ENCODE measurements at regions of chr1 and their contacts with region 1.

Region 1: GRCh38 chr1:248622570-248623001 is 12.3 kb downstream of the OR2T11 start:
- DNase-seq: peak in 1 of 2 experiments; percentile 12
- H3K4me3 ChIP-seq: no peak overlapping the region
- H3K4me3 Mint-ChIP-seq: no peak overlapping the region
- H3K27ac Mint-ChIP-seq: no peak overlapping the region
- H3K4me1 ChIP-seq: no peaks in the 10 kb centered on the region
- H3K4me1 Mint-ChIP-seq: no peaks in the 10 kb centered on the region
- H3K27me3 ChIP-seq: no peaks in the 10 kb centered on the region
- H3K27me3 Mint-ChIP-seq: peaks cover 14% of the 10 kb centered on the region
- CTCF ChIP-seq: peak in 1 of 2 experiments; percentile 51

Region 2: GRCh38 chr1:248686815-248687214 is 64.2 kb after region 1 on chr1:
- CTCF ChIA-PET with region 1: no interaction called
- POLR2A ChIA-PET with region 1: no interaction called
- intact Hi-C with region 1: loop called (anchors 1 kb)
- DNase-seq: peak in 1 of 2 experiments; percentile 23
- H3K4me3 ChIP-seq: no peak overlapping the region
- H3K4me3 Mint-ChIP-seq: no peak overlapping the region
- H3K27ac Mint-ChIP-seq: no peak overlapping the region
- H3K4me1 ChIP-seq: no peaks in the 10 kb centered on the region
- H3K4me1 Mint-ChIP-seq: no peaks in the 10 kb centered on the region
- H3K27me3 ChIP-seq: no peaks in the 10 kb centered on the region
- H3K27me3 Mint-ChIP-seq: no peaks in the 10 kb centered on the region
- CTCF ChIP-seq: peak in 1 of 2 experiments; percentile 24

Region 3: GRCh38 chr1:248696261-248696660 is 73.7 kb after region 1 on chr1:
- CTCF ChIA-PET with region 1: no interaction called
- POLR2A ChIA-PET with region 1: no interaction called
- intact Hi-C with region 1: loop called (anchors 2 kb)
- DNase-seq: peak; percentile 26 to 38
- H3K4me3 ChIP-seq: no peak overlapping the region
- H3K4me3 Mint-ChIP-seq: no peak overlapping the region
- H3K27ac Mint-ChIP-seq: no peak overlapping the region
- H3K4me1 ChIP-seq: no peaks in the 10 kb centered on the region
- H3K4me1 Mint-ChIP-seq: no peaks in the 10 kb centered on the region
- H3K27me3 ChIP-seq: no peaks in the 10 kb centered on the region
- H3K27me3 Mint-ChIP-seq: no peaks in the 10 kb centered on the region
- CTCF ChIP-seq: peak in 1 of 2 experiments; percentile 38

Region 4: GRCh38 chr1:248778906-248779305 is 156.3 kb after region 1 on chr1:
- CTCF ChIA-PET with region 1: no interaction called
- POLR2A ChIA-PET with region 1: no interaction called
- intact Hi-C with region 1: no loop called
- DNase-seq: no peak
- H3K4me3 ChIP-seq: no peak overlapping the region
- H3K4me3 Mint-ChIP-seq: no peak overlapping the region
- H3K27ac Mint-ChIP-seq: no peak overlapping the region
- H3K4me1 ChIP-seq: no peaks in the 10 kb centered on the region
- H3K4me1 Mint-ChIP-seq: peaks cover 7% of the 10 kb centered on the region
- H3K27me3 ChIP-seq: no peaks in the 10 kb centered on the region
- H3K27me3 Mint-ChIP-seq: no peaks in the 10 kb centered on the region
- CTCF ChIP-seq: no peak

Measured in Caco-2 (cell line).